ENCODE measurements at regions of chr4 and their contacts with region 1.

Region 1: GRCh38 chr4:6172093-6172926 is 28.0 kb downstream of the JAKMIP1 start:
- DNase-seq: peak; percentile 80
- H3K4me3 ChIP-seq: no peak overlapping the region
- H3K27ac ChIP-seq: peak overlapping the region in 1 of 2 experiments; percentile 98; a peak in 2 of 4 replicates
- H3K4me1 ChIP-seq: peaks cover 0 to 52% of the 10 kb centered on the region in 2 experiments; a peak in 2 of 4 replicates
- H3K27me3 ChIP-seq: no peaks in the 10 kb centered on the region
- CTCF ChIP-seq: no peak
- EP300 ChIP-seq: peak in 1 of 2 experiments; percentile 99; a peak in 2 of 4 replicates
- RAD21 ChIP-seq: peak; percentile 42

Region 2: DNA sequence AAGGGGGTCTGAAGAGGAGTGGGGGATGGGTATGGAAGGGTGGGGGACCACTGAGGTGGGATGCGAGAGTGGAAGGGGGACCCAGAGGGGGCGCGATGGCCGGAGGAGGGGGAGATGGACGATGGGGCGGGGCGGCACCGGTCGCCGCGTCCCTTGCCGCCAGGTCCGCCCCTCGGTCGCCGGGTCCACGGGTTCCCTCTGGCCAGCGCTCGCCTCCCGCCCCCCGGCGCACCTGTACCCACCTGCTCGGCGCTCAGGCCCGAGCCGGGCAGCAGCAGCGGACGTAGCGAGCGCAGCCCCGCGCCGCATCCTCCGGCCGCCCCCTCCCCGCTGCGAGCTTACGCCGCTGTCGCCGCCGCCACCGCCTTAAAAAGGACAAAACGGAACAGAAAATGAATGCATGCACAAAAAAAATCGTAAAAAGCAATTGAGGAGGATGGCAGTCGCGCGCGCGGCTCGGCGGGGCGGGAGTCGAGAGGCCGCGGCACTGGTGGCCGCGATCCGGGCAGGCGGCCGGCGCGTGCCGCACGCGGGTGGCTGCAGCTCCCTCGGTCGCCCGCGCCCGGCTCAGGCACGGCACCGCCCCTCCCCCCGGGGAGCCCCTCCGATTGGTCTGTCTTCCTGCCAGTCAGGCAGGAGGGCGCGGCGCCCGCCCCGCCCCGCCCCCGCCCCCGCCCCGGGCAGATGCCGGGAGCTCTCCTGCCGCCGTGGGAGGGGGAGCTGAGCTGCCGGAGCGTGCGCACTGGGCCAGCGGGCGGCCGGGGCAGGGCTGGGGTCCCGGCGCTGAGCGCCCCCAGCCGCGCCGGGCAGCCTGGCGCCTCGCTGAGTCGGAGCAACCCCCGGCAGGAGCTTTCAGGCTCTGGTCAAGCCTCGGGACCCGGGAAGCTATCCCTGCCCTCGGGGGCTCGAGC is 28.0 kb after region 1 on chr4 and contains the start of gene JAKMIP1:
- CTCF ChIA-PET with region 1: interaction called, 9 read pairs
- POLR2A ChIA-PET with region 1: interaction called, 27 read pairs
- DNase-seq: peak; percentile 99
- H3K4me3 ChIP-seq: peak within 1 kb of the TSS; percentile 37 to 54; a peak in 3 of 4 replicates
- H3K27ac ChIP-seq: peak within 1 kb of the TSS in 1 of 2 experiments; percentile 91; a peak in 2 of 4 replicates
- H3K4me1 ChIP-seq: peaks cover 0 to 39% of the 10 kb centered on the region in 2 experiments; a peak in 1 of 4 replicates
- H3K27me3 ChIP-seq: no peaks in the 10 kb centered on the region
- CTCF ChIP-seq: no peak
- EP300 ChIP-seq: no peak
- RAD21 ChIP-seq: no peak
- polyA plus RNA-seq, gene JAKMIP1: 0.54 and 1.0 TPM in 2 replicates

Measured in SK-N-SH (cell line).